ENCODE measurements at regions of chr5 and their contacts with region 1.

Region 1: GRCh38 chr5:150751096-150751891 is 7.5 kb downstream of the DCTN4 start:
- DNase-seq: no peak
- H3K4me3 ChIP-seq: no peak overlapping the region
- H3K4me3 Mint-ChIP-seq: no peak overlapping the region
- H3K27ac ChIP-seq: peak overlapping the region in 1 of 2 donors; percentile 65
- H3K27ac Mint-ChIP-seq: peak overlapping the region in 2 of 7 donors; percentile 6 to 8
- H3K4me1 ChIP-seq: no peaks in the 10 kb centered on the region
- H3K4me1 Mint-ChIP-seq: peaks cover 11% of the 10 kb centered on the region
- H3K27me3 ChIP-seq: no peaks in the 10 kb centered on the region
- H3K27me3 Mint-ChIP-seq: no peaks in the 10 kb centered on the region
- CTCF ChIP-seq: no peak

Region 2: DNA sequence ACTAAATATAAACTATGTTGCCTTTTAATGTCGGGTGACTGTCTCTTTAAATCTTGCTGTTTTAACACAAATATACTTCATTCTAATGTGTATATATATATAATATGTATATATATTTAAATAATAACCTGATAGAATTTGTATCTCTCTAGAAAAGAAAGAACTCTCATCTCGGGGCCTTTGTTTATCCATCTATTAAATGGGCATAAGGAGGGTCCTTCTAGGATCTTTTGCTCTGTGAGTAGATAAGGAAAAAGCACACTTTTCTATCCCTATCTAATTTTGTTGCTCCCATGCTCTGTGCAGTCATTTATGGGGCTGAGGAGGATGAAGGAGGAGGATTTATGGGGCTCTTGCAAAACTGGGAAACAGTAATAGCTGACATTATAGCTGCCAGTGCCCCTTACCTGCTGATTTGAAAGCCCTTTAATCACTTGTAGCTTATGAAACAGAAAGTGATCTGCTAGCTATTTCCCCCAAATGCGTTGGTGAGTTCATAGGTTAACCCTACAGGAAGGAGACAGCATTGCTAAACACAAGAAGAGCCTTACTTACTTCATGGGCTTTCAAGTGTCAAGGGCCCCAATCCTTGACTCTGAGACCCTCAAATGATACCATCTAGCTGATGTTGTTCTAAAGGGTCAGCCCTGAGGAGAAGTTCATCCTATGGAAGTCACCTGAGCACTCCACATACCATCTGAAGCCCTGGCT is 1027.0 kb before region 1 on chr5:
- intact Hi-C with region 1: no loop called
- DNase-seq: peak in 2 of 3 donors; percentile 14 to 26
- H3K4me3 ChIP-seq: no peak overlapping the region
- H3K4me3 Mint-ChIP-seq: no peak overlapping the region
- H3K27ac ChIP-seq: no peak overlapping the region
- H3K27ac Mint-ChIP-seq: no peak overlapping the region
- H3K4me1 ChIP-seq: peaks cover 9 to 12% of the 10 kb centered on the region in 2 donors
- H3K4me1 Mint-ChIP-seq: peaks cover 25% of the 10 kb centered on the region
- H3K27me3 ChIP-seq: no peaks in the 10 kb centered on the region
- H3K27me3 Mint-ChIP-seq: peaks cover 0 to 3% (median 2%) of the 10 kb centered on the region in 3 donors
- CTCF ChIP-seq: no peak

Region 3: DNA sequence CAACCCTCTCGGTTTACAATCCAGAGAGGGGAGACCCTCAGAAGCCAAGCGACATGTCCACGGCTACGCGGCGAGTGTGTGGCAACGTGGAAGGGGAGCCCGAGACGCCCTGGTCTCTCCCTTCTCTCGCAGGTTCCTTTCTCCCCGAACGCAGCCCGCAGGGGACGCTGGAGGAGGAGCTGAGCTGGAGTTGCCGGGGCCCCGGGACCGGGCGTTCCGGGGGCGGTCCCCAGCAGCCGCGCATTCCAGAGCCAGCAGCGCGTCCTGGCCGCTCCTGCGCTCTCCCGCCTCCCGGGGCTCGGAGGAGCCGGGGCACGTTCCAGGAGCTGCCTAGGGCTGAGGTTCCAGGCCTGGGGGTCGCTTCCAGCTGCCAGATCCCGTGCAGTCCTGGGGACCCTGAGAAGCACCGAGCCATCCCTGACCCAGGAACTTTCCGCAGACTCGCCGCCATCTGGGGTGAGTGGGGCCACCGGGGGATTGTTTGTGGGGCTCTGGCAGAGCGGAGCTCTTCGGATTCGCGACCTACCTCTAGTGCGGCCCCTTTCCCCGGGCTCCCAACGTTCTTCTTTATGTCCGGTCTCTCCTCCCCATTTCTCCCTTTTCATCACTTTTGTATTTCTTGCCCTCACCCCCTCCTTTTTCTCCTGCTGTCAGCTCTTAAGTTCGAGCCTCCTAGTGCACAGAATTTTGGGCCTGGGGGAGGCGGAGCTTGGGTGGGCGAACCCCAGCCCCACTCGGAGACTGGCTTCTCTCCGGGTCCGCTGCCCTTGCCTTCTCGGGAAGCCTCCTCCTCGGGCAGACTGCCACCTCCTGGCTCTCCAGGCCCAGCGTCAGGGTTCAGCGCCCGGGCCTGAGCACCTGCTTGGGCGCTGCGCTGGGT is 27.5 kb after region 1 on chr5 and contains the start of gene SMIM3:
- intact Hi-C with region 1: no loop called
- DNase-seq: peak; percentile 59 to 69 (median 66)
- H3K4me3 ChIP-seq: peak within 1 kb of the TSS; percentile 78 to 96 (median 78)
- H3K4me3 Mint-ChIP-seq: peak within 1 kb of the TSS; percentile 99
- H3K27ac ChIP-seq: peak within 1 kb of the TSS; percentile 78 to 86
- H3K27ac Mint-ChIP-seq: peak within 1 kb of the TSS; percentile 92 to 99 (median 97)
- H3K4me1 ChIP-seq: peaks cover 54 to 57% of the 10 kb centered on the region in 2 donors
- H3K4me1 Mint-ChIP-seq: peaks cover 62% of the 10 kb centered on the region
- H3K27me3 ChIP-seq: no peaks in the 10 kb centered on the region
- H3K27me3 Mint-ChIP-seq: no peaks in the 10 kb centered on the region
- CTCF ChIP-seq: peak; percentile 67
- polyA plus RNA-seq, gene SMIM3: 41.7 to 52.2 (median 45.4) TPM

Region 4: GRCh38 chr5:150789943-150790611 is 38.8 kb after region 1 on chr5:
- intact Hi-C with region 1: loop called in 1 of 2 experiments (anchors 5 kb)
- DNase-seq: peak; percentile 76 to 92 (median 89)
- H3K4me3 ChIP-seq: peak overlapping the region in 1 of 3 experiments; percentile 60
- H3K4me3 Mint-ChIP-seq: peak overlapping the region; percentile 31 to 77
- H3K27ac ChIP-seq: peak overlapping the region; percentile 36 to 81
- H3K27ac Mint-ChIP-seq: peak overlapping the region; percentile 80 to 94 (median 85)
- H3K4me1 ChIP-seq: peaks cover 43 to 45% of the 10 kb centered on the region in 2 donors
- H3K4me1 Mint-ChIP-seq: peaks cover 58% of the 10 kb centered on the region
- H3K27me3 ChIP-seq: no peaks in the 10 kb centered on the region
- H3K27me3 Mint-ChIP-seq: no peaks in the 10 kb centered on the region
- CTCF ChIP-seq: no peak